HCT116 (cell line): ENCODE measurements at regions of chr6 and their contacts with region 1.

Region 1: DNA sequence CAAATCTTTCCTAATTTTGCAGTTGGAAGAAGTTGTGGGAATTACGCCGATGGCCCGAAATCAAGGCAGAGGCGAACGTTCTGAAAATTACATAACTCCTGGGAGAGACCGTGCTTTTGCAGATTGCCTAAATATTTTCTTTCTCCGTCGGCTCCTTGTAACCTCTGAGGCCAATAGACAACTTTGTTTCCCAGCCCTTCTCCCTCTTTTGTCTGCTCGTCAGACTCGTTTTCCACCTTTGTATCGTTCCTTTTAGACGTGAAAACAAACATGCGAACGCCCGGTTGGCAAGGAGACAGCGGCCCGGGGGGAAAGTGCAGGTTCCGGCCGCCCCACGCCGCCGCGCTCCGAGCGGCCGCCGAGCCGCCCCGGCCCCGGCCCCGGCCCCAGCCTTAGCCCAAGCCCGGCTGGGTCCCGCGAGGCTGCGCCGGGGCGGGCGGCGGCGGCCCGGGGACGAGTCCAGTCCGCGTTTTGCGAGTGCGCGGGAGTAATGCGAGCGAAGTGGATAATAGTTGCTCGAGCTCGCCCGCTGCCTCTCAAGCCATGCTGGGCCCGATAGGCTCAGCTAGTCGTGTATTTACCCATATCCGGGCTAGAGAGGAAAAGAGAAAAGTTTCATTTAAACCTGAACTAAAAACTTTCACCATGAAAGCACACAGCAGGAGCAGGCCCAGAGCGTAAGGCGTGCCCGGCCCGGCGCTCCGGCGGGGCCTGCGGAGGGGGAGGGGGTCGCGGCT is at the start of gene ARID1B:
- DNase-seq: no peak
- ATAC-seq: peak; percentile 50
- H3K4me3 ChIP-seq: peak within 1 kb of the TSS; percentile 70 to 77
- H3K27ac ChIP-seq: peak within 1 kb of the TSS; percentile 95
- H3K4me1 ChIP-seq: peaks cover 27 to 40% of the 10 kb centered on the region in 2 experiments
- H3K27me3 ChIP-seq: no peaks in the 10 kb centered on the region
- CTCF ChIP-seq: no peak
- POLR2A ChIP-seq: peak; percentile 58
- RAD21 ChIP-seq: no peak
- total RNA-seq, gene ARID1B: 35.6 TPM

Region 2: DNA sequence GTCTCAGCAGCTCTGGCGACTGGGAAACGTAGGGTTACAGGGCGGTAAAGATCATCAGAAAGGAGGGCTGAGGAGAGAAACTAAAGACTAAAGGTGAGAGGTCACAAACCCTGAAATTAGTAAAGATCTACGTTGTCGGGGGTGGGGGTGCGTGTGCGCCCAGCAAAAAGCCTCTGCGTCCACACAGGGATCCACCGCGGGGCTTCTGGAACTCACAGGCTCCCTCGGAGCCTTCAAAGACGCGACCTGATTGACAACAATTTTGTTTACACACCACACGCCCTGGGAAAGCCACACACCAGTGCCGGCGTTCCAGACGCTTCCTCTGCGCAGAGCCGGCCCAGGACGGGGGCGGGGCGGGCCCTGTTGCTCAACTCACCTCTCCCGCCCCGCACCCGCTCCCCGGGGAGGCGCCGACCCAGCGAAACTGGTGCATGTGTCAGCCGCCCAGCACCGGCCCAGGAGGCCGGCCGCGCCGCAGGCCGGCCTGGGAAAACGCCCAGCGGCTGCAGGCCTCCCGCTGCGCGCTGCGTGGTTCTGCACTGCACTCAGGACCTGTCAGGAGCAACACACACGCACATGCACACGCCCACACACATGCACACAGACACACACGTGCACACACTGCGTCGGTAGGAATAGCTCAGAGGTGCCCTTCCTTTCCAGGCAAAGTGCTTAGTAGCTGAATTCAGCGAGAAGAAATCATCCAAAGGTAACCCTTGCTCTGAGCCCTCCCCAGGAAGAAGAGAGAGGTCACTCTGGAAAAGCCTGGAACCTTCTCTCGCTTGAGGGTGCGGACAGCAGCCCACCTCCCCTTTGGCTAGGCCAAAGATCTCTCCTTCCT is 57.1 kb before region 1 on chr6:
- CTCF ChIA-PET with region 1: interaction called, 3 read pairs
- POLR2A ChIA-PET with region 1: no interaction called
- RAD21 ChIA-PET with region 1: no interaction called
- intact Hi-C with region 1: loop called (anchors 5 kb)
- DNase-seq: peak; percentile 72
- ATAC-seq: peak; percentile 90
- H3K4me3 ChIP-seq: peak overlapping the region; percentile 29 to 40
- H3K27ac ChIP-seq: peak overlapping the region; percentile 71
- H3K4me1 ChIP-seq: peaks cover 32 to 34% of the 10 kb centered on the region in 2 experiments
- H3K27me3 ChIP-seq: no peaks in the 10 kb centered on the region
- CTCF ChIP-seq: no peak
- POLR2A ChIP-seq: peak; percentile 41
- RAD21 ChIP-seq: 0 out of 2 replicates have a peak, but pooled peaks have one; percentile 10

Region 3: GRCh38 chr6:157021993-157022740 is 245.2 kb after region 1 on chr6:
- CTCF ChIA-PET with region 1: no interaction called
- POLR2A ChIA-PET with region 1: no interaction called
- RAD21 ChIA-PET with region 1: no interaction called
- intact Hi-C with region 1: loop called (anchors 2 kb)
- DNase-seq: peak; percentile 31
- ATAC-seq: peak; percentile 75
- H3K4me3 ChIP-seq: peak overlapping the region; percentile 75 to 79
- H3K27ac ChIP-seq: peak overlapping the region; percentile 81
- H3K4me1 ChIP-seq: peaks cover 5 to 14% of the 10 kb centered on the region in 2 experiments
- H3K27me3 ChIP-seq: no peaks in the 10 kb centered on the region
- CTCF ChIP-seq: no peak
- POLR2A ChIP-seq: peak; percentile 28
- RAD21 ChIP-seq: no peak